ENCODE measurements at regions of chr11 and their contacts with region 1.

Region 1: DNA sequence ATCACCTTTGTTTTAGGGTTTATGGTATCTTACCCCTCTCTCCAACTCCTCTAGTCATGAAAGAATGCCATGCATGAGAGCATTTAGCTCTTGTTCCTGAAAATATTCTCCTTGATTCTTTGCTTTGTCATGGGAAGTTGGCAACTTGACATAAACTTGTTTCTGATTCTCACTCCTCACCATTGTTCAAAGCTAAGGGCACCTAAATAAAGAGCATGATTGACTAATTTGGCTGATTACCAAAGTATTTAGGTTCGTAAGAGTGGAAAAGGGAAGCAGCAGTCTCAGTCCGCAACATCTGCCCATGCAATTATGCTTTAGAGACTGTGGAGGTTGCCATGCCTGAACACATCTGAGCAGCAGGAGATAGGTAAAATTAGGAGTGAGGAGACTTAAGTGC is 26.4 kb downstream of the OR52K1 start:
- DNase-seq: no peak
- H3K4me3 ChIP-seq: no peak overlapping the region
- H3K4me3 Mint-ChIP-seq: no peak overlapping the region
- H3K27ac ChIP-seq: no peak overlapping the region
- H3K27ac Mint-ChIP-seq: no peak overlapping the region
- H3K4me1 ChIP-seq: no peaks in the 10 kb centered on the region
- H3K4me1 Mint-ChIP-seq: no peaks in the 10 kb centered on the region
- H3K27me3 ChIP-seq: no peaks in the 10 kb centered on the region
- H3K27me3 Mint-ChIP-seq: peaks cover 2 to 41% of the 10 kb centered on the region in 2 donors

Region 2: DNA sequence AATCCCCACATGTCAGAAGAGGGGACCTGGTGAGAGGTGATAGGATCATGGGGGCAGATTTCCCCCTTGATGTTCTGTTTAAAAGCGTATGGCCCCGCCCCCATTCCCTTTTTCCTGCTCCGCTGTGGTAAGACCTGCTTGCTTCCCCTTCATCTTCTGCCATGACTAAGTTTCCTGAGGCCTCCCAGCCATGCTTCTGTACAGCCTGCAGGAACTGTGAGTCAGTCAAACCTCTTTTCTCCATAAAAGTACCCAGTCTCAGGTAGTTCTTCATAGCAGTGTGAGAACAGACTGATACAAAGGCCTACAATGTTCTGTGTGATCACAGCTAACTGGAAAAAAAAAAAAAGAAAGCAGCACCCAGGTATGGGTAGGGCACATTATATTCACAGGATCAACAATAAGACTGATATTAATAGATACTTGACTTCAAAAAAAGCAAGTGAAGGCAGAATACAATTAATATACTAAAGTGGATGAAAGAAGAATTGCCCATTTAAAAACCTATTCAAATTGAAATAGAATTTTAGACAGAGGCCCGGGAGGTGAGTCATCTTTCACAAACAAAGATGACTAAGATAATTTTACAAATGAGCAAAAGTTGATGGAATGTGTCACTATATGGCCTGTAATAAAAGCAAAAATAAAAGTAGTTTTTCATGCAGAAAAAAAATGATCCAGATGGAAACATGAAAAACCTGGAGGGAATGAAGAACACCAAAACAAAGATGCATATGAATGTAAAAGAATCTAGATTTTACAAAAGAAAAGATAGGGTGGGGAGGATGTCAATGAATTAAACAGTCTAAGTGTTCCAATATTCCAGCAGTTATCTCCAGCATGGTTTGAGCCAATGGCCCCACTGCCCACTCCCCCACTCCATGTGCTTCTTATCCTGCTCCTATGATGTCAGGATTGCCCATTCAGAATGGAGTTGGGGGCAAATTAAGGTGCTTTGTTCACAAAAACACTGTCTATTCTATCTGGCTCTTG is 28.0 kb before region 1 on chr11:
- CTCF ChIA-PET with region 1: no interaction called
- POLR2A ChIA-PET with region 1: no interaction called
- DNase-seq: no peak
- H3K4me3 ChIP-seq: no peak overlapping the region
- H3K4me3 Mint-ChIP-seq: no peak overlapping the region
- H3K27ac ChIP-seq: no peak overlapping the region
- H3K27ac Mint-ChIP-seq: no peak overlapping the region
- H3K4me1 ChIP-seq: no peaks in the 10 kb centered on the region
- H3K4me1 Mint-ChIP-seq: no peaks in the 10 kb centered on the region
- H3K27me3 ChIP-seq: no peaks in the 10 kb centered on the region
- H3K27me3 Mint-ChIP-seq: peaks cover 3 to 7% of the 10 kb centered on the region in 2 donors

Region 3: GRCh38 chr11:4493480-4493818 is 15.4 kb before region 1 on chr11:
- CTCF ChIA-PET with region 1: interaction called, 11 read pairs
- POLR2A ChIA-PET with region 1: no interaction called
- DNase-seq: no peak
- H3K4me3 ChIP-seq: no peak overlapping the region
- H3K4me3 Mint-ChIP-seq: peak overlapping the region in 1 of 7 donors; percentile 42
- H3K27ac ChIP-seq: no peak overlapping the region
- H3K27ac Mint-ChIP-seq: no peak overlapping the region
- H3K4me1 ChIP-seq: no peaks in the 10 kb centered on the region
- H3K4me1 Mint-ChIP-seq: peaks cover 2 to 6% (median 5%) of the 10 kb centered on the region in 3 donors
- H3K27me3 ChIP-seq: peaks cover 6% of the 10 kb centered on the region
- H3K27me3 Mint-ChIP-seq: peaks cover 5 to 38% of the 10 kb centered on the region in 2 donors